ENCODE measurements at regions of chr12 and their contacts with region 1.

Region 1: GRCh38 chr12:13165617-13166041 is 30.9 kb upstream of the EMP1 start:
- DNase-seq: peak in 4 of 10 donors; percentile 20 to 58 (median 40)
- H3K4me3 ChIP-seq: no peak overlapping the region
- H3K27ac ChIP-seq: no peak overlapping the region
- H3K27me3 ChIP-seq: no peaks in the 10 kb centered on the region
- CTCF ChIP-seq: no peak

Region 2: DNA sequence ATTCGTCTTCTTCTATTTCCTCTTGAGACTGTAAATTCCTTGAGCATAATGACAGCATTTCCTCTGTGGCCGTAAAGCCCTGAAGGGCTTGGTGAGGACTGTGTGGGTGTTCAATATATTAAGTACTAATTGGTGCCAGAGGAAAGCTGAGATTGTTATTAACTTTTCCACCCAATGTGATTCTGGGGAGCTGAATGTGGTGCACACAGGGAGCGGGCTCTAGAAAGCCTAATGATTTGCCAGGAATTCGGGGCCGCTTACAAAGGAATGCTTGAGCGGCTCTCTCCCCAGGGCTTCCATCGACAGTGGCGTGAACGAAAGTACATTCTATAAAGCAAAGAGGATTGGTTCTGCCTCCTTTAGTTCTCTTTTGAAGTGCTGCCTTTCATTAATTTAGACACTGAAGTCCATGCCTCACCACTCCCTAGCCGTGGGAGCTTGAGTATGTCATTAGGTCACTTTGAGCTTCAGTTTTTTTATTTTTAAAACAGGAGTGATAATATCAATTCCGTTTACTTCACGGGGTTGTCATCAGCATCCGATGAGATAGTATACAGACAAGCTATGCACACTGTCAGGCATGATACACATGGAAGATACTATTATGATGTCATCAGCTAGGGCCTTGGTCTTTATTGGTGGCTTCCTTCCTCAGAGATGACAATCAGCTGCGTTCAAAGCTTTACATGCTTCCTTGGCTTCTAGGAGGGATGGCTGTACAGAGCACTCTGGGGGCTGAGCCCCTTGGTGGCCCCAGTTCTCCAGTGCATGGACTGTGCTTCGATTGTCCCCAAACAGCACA is 51.2 kb before region 1 on chr12:
- intact Hi-C with region 1: loop called (anchors 1 to 2 kb)
- DNase-seq: no peak
- H3K4me3 ChIP-seq: no peak overlapping the region
- H3K27ac ChIP-seq: no peak overlapping the region
- H3K27me3 ChIP-seq: no peaks in the 10 kb centered on the region
- CTCF ChIP-seq: no peak

Measured in dorsolateral prefrontal cortex (tissue), 120 donors.